B cell (primary cell): ENCODE measurements at regions of chr12 and their contacts with region 1.

Region 1: GRCh38 chr12:40229690-40230651 is 5.2 kb downstream of the LRRK2 start:
- DNase-seq: no peak
- ATAC-seq: no peak
- H3K4me3 ChIP-seq: peak overlapping the region in 4 of 5 experiments; percentile 8 to 64 (median 16)
- H3K4me3 Mint-ChIP-seq: peak overlapping the region; percentile 78
- H3K27ac ChIP-seq: peak overlapping the region; percentile 80 to 98
- H3K27ac Mint-ChIP-seq: peak overlapping the region; percentile 86
- H3K4me1 ChIP-seq: peaks cover 69 to 72% of the 10 kb centered on the region in 2 donors
- H3K4me1 Mint-ChIP-seq: peaks cover 66% of the 10 kb centered on the region
- H3K27me3 ChIP-seq: no peaks in the 10 kb centered on the region
- H3K27me3 Mint-ChIP-seq: no peaks in the 10 kb centered on the region
- CTCF ChIP-seq: no peak

Region 2: GRCh38 chr12:42162193-42162592 is 1932.2 kb after region 1 on chr12:
- CTCF ChIA-PET with region 1: no interaction called
- POLR2A ChIA-PET with region 1: interaction called, 12 read pairs
- intact Hi-C with region 1: no loop called
- DNase-seq: no peak
- ATAC-seq: no peak
- H3K4me3 ChIP-seq: no peak overlapping the region
- H3K4me3 Mint-ChIP-seq: no peak overlapping the region
- H3K27ac ChIP-seq: peak overlapping the region in 1 of 2 donors; percentile 72
- H3K27ac Mint-ChIP-seq: no peak overlapping the region
- H3K4me1 ChIP-seq: peaks cover 6 to 19% of the 10 kb centered on the region in 2 donors
- H3K4me1 Mint-ChIP-seq: peaks cover 25% of the 10 kb centered on the region
- H3K27me3 ChIP-seq: no peaks in the 10 kb centered on the region
- H3K27me3 Mint-ChIP-seq: no peaks in the 10 kb centered on the region
- CTCF ChIP-seq: no peak